Mammary epithelial cell (primary cell): ENCODE measurements at regions of chr5 and their contacts with region 1.

Region 1: GRCh38 chr5:147188200-147189108 is 46.4 kb upstream of the STK32A start:
- DNase-seq: peak; percentile 33
- H3K4me3 ChIP-seq: no peak overlapping the region
- H3K27ac ChIP-seq: no peak overlapping the region
- H3K4me1 ChIP-seq: no peaks in the 10 kb centered on the region
- H3K27me3 ChIP-seq: no peaks in the 10 kb centered on the region
- CTCF ChIP-seq: peak; percentile 73 to 76

Region 2: DNA sequence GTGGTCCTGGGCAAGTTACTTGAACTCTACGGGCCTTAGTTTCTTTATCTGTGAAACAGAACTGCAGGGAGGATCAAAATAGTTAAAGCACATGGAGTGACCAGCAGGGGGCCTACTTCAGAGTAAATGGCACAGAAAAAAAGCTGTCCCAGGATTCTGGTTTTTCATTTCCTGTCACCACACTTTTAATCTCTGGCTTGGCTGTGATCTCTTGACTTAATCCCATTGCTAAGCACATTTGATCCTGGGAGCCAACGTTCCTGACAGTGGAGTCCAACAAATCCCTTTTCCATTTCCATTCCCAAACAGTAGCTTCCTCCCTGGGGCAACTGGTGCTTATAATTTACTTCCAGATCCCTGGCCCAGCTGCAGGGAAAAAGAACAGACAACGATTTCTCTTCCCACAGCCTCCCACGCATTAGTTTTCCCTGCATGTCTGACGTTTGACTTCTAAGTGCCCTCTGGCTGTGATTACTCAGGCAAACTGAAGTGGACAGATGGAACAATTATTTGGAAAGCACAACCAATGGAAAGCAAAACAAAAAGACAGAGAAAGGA is 90.1 kb before region 1 on chr5:
- CTCF ChIA-PET with region 1: interaction called, 6 read pairs
- dilution Hi-C with region 1: no loop called
- in situ Hi-C with region 1: no loop called
- intact Hi-C with region 1: loop called (anchors 1 kb)
- DNase-seq: peak; percentile 22
- H3K4me3 ChIP-seq: no peak overlapping the region
- H3K27ac ChIP-seq: no peak overlapping the region
- H3K4me1 ChIP-seq: peaks cover 5% of the 10 kb centered on the region
- H3K27me3 ChIP-seq: no peaks in the 10 kb centered on the region
- CTCF ChIP-seq: peak; percentile 42 to 52